ENCODE measurements at regions of chr14 and their contacts with region 1.

Region 1: DNA sequence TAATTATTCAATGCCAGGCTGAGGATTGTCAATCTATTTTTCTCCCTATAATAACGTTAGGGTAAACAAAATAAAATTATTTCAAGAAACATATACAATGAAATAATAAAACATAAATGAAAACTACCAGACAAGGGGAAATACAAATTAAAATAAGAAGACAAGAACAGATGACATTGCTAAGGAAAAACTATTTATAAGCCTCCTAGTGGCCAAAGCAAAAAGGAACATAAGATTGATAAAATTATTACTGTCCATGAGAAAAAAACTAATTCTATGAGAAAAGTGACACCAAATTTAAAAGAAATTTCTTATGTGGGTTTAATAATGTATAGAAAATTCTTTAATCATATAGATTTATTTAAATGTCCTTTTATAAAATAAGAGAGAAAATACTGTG is 294.7 kb downstream of the TTC6 start:
- DNase-seq: no peak
- H3K4me3 ChIP-seq: no peak overlapping the region
- H3K27ac ChIP-seq: no peak overlapping the region
- H3K4me1 ChIP-seq: peaks cover 0 to 9% (median 3%) of the 10 kb centered on the region in 4 experiments; a peak in 2 of 7 replicates
- H3K27me3 ChIP-seq: no peaks in the 10 kb centered on the region; a peak in 1 of 7 replicates
- CTCF ChIP-seq: peak in 1 of 3 experiments; percentile 4; a peak in 1 of 4 replicates
- EP300 ChIP-seq: no peak
- POLR2A ChIP-seq: no peak
- RAD21 ChIP-seq: no peak

Region 2: GRCh38 chr14:37091651-37092050 is 798.4 kb before region 1 on chr14:
- CTCF ChIA-PET with region 1: no interaction called
- POLR2A ChIA-PET with region 1: no interaction called
- DNase-seq: no peak
- H3K4me3 ChIP-seq: no peak overlapping the region
- H3K27ac ChIP-seq: no peak overlapping the region
- H3K4me1 ChIP-seq: no peaks in the 10 kb centered on the region
- H3K27me3 ChIP-seq: no peaks in the 10 kb centered on the region
- CTCF ChIP-seq: no peak
- EP300 ChIP-seq: no peak
- POLR2A ChIP-seq: no peak
- RAD21 ChIP-seq: no peak

Region 3: GRCh38 chr14:37874429-37875191 is 15.5 kb before region 1 on chr14:
- CTCF ChIA-PET with region 1: interaction called, 18 read pairs
- POLR2A ChIA-PET with region 1: no interaction called
- DNase-seq: peak; percentile 71 to 99
- H3K4me3 ChIP-seq: no peak overlapping the region
- H3K27ac ChIP-seq: no peak overlapping the region
- H3K4me1 ChIP-seq: peaks cover 0 to 7% (median 3%) of the 10 kb centered on the region in 4 experiments; a peak in 5 of 7 replicates
- H3K27me3 ChIP-seq: no peaks in the 10 kb centered on the region
- CTCF ChIP-seq: peak; percentile 86 to 98 (median 92)
- EP300 ChIP-seq: no peak
- POLR2A ChIP-seq: no peak
- RAD21 ChIP-seq: peak; percentile 98

Measured in H1 (cell line).